ENCODE measurements at regions of chr7 and their contacts with region 1.

Region 1: GRCh38 chr7:158976849-158977593 is 120.7 kb downstream of the DYNC2I1 start:
- DNase-seq: peak; percentile 83 to 96 (median 92)
- ATAC-seq: peak; percentile 85
- H3K4me3 ChIP-seq: peak overlapping the region; percentile 55
- H3K4me3 Mint-ChIP-seq: peak overlapping the region; percentile 93
- H3K27ac ChIP-seq: no peak overlapping the region
- H3K27ac Mint-ChIP-seq: peak overlapping the region; percentile 77
- H3K4me1 ChIP-seq: peaks cover 26% of the 10 kb centered on the region
- H3K4me1 Mint-ChIP-seq: peaks cover 22% of the 10 kb centered on the region
- H3K27me3 ChIP-seq: no peaks in the 10 kb centered on the region
- H3K27me3 Mint-ChIP-seq: no peaks in the 10 kb centered on the region
- CTCF ChIP-seq: peak; percentile 89

Region 2: GRCh38 chr7:158394936-158395335 is 582.1 kb before region 1 on chr7:
- CTCF ChIA-PET with region 1: no interaction called
- POLR2A ChIA-PET with region 1: no interaction called
- intact Hi-C with region 1: loop called (anchors 5 to 10 kb)
- DNase-seq: peak in 11 of 14 experiments; percentile 9 to 54 (median 19)
- ATAC-seq: no peak
- H3K4me3 ChIP-seq: no peak overlapping the region
- H3K4me3 Mint-ChIP-seq: no peak overlapping the region
- H3K27ac ChIP-seq: no peak overlapping the region
- H3K27ac Mint-ChIP-seq: no peak overlapping the region
- H3K4me1 ChIP-seq: peaks cover 4% of the 10 kb centered on the region
- H3K4me1 Mint-ChIP-seq: no peaks in the 10 kb centered on the region
- H3K27me3 ChIP-seq: no peaks in the 10 kb centered on the region
- H3K27me3 Mint-ChIP-seq: no peaks in the 10 kb centered on the region
- CTCF ChIP-seq: peak; percentile 65

Region 3: DNA sequence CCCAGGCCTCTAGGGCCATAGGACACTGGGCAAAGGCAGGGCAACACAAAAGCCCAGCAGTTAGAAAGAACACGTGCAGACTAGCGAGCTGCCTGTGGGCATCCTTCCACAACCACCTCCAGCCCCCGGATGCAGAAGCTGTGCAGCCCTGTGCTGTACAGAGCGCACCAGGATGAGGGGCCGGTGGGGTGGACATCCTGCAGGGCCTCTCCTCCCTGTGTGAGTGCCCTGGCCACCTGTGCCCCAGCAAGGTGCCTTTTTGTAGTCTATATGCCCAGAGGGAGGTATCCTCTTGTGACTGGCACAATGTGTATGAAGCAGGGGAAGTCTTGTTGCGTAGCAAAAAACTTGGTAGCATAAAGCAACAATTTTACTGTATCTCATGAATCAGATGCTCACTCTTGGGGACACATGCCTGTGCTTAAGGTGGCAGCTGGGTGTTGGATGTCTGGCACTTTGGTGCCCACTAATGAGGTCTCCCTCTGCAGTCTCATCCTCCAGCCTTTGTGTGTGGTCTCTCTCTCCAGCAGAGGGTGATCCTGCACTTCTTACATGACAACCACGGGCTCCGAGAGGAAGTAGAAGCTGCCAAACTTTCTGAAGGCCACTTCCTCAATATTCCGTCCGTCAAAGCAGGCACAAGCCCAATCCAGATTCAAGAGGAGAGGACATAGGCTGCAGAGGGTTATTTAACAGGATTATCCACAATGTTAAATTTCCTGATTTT is 281.1 kb before region 1 on chr7:
- CTCF ChIA-PET with region 1: interaction called, 35 read pairs
- POLR2A ChIA-PET with region 1: interaction called, 20 read pairs
- intact Hi-C with region 1: loop called (anchors 1 kb)
- DNase-seq: peak; percentile 27 to 87 (median 48)
- ATAC-seq: peak; percentile 97
- H3K4me3 ChIP-seq: no peak overlapping the region
- H3K4me3 Mint-ChIP-seq: peak overlapping the region; percentile 46
- H3K27ac ChIP-seq: no peak overlapping the region
- H3K27ac Mint-ChIP-seq: peak overlapping the region; percentile 35
- H3K4me1 ChIP-seq: peaks cover 10% of the 10 kb centered on the region
- H3K4me1 Mint-ChIP-seq: peaks cover 11% of the 10 kb centered on the region
- H3K27me3 ChIP-seq: no peaks in the 10 kb centered on the region
- H3K27me3 Mint-ChIP-seq: no peaks in the 10 kb centered on the region
- CTCF ChIP-seq: peak; percentile 76

Region 4: GRCh38 chr7:158782761-158783401 is 194.1 kb before region 1 on chr7:
- CTCF ChIA-PET with region 1: no interaction called
- POLR2A ChIA-PET with region 1: no interaction called
- intact Hi-C with region 1: loop called in 1 of 2 experiments (anchors 2 kb)
- DNase-seq: peak in 5 of 14 experiments; percentile 13 to 55 (median 28)
- ATAC-seq: peak; percentile 19
- H3K4me3 ChIP-seq: no peak overlapping the region
- H3K4me3 Mint-ChIP-seq: no peak overlapping the region
- H3K27ac ChIP-seq: no peak overlapping the region
- H3K27ac Mint-ChIP-seq: no peak overlapping the region
- H3K4me1 ChIP-seq: peaks cover 29% of the 10 kb centered on the region
- H3K4me1 Mint-ChIP-seq: peaks cover 7% of the 10 kb centered on the region
- H3K27me3 ChIP-seq: no peaks in the 10 kb centered on the region
- H3K27me3 Mint-ChIP-seq: no peaks in the 10 kb centered on the region
- CTCF ChIP-seq: no peak

Region 5: GRCh38 chr7:158991824-158992583 is 15.0 kb after region 1 on chr7:
- CTCF ChIA-PET with region 1: interaction called, 5 read pairs
- POLR2A ChIA-PET with region 1: interaction called, 3 read pairs
- intact Hi-C with region 1: loop called in 1 of 2 experiments (anchors 2 kb)
- DNase-seq: peak in 6 of 14 experiments; percentile 19 to 77 (median 38)
- ATAC-seq: peak; percentile 92
- H3K4me3 ChIP-seq: no peak overlapping the region
- H3K4me3 Mint-ChIP-seq: peak overlapping the region; percentile 49
- H3K27ac ChIP-seq: no peak overlapping the region
- H3K27ac Mint-ChIP-seq: peak overlapping the region; percentile 74
- H3K4me1 ChIP-seq: peaks cover 13% of the 10 kb centered on the region
- H3K4me1 Mint-ChIP-seq: peaks cover 23% of the 10 kb centered on the region
- H3K27me3 ChIP-seq: peaks cover 14 to 19% of the 10 kb centered on the region in 2 experiments
- H3K27me3 Mint-ChIP-seq: peaks cover 47% of the 10 kb centered on the region
- CTCF ChIP-seq: no peak